ENCODE measurements at regions of chr7 and their contacts with region 1.

Region 1: DNA sequence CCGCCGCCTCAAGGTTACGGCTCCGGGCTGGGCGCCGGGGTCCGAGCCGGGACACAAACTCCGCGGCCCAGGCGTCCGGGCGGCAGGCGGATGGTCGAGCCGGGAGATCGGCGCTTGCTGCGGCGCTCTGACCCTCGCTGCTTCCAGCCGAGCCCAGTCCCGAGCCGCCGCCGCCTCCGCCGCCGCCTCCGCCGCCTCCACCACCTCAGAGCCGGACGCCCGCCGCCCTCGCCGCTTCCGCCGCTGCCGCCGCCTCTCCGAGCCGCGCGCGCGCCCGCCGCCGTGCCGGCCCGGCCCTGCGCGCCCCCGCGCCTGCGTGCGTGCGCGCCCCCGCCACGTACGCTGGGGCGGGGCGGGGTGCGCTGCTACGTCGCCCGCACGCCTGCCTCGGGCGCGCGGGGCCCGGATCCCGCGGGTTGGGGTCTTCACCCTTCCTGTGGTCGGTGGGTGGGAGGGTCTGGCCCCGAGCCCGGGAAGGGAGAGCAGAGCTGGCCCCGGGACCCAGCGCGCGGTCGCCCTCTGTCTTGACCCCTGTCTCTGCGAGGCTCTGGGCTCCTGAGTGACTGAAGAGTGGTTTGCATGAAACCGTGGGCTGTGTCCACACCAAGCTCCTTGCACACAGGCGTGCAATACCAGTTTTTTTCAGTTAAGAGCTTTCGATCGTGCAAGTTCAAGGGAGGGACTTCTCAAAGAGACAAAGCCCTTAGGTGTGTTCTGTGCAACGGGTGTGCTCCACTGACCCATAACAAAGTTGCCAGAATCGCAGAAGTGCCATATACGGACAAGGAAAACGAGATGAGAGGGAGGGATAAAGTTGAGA is at the start of gene SMURF1:
- DNase-seq: peak in 1 of 2 experiments; percentile 79
- H3K4me3 ChIP-seq: peak within 1 kb of the TSS; percentile 75
- H3K27ac ChIP-seq: peak within 1 kb of the TSS; percentile 82
- H3K4me1 ChIP-seq: peaks cover 33% of the 10 kb centered on the region
- H3K27me3 ChIP-seq: no peaks in the 10 kb centered on the region
- CTCF ChIP-seq: no peak
- total RNA-seq, gene SMURF1: 53.2 and 63.9 TPM in 2 replicates

Region 2: DNA sequence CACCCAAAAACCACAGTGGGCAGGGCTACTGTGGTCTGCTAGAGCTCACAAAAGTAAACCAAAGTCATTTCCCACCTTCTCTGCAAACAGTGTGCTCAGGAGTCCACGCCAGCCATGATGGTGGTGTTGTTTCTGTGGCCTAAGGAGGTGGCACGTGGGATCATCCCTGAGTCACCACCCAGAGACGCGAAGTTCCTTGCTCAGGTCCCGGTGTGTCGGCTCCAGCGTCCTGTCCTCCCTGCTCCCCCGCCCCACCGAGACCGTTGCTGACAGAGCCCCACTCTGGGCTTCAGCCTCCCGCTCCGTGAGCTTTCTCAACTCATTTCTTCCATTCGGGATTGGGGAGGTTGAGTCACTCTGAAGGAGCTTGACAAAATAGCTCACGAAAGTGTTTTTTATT is 408.3 kb before region 1 on chr7:
- CTCF ChIA-PET with region 1: no interaction called
- POLR2A ChIA-PET with region 1: no interaction called
- intact Hi-C with region 1: no loop called
- DNase-seq: no peak
- H3K4me3 ChIP-seq: no peak overlapping the region
- H3K27ac ChIP-seq: no peak overlapping the region
- H3K4me1 ChIP-seq: no peaks in the 10 kb centered on the region
- H3K27me3 ChIP-seq: peaks cover 43% of the 10 kb centered on the region
- CTCF ChIP-seq: no peak

Region 3: DNA sequence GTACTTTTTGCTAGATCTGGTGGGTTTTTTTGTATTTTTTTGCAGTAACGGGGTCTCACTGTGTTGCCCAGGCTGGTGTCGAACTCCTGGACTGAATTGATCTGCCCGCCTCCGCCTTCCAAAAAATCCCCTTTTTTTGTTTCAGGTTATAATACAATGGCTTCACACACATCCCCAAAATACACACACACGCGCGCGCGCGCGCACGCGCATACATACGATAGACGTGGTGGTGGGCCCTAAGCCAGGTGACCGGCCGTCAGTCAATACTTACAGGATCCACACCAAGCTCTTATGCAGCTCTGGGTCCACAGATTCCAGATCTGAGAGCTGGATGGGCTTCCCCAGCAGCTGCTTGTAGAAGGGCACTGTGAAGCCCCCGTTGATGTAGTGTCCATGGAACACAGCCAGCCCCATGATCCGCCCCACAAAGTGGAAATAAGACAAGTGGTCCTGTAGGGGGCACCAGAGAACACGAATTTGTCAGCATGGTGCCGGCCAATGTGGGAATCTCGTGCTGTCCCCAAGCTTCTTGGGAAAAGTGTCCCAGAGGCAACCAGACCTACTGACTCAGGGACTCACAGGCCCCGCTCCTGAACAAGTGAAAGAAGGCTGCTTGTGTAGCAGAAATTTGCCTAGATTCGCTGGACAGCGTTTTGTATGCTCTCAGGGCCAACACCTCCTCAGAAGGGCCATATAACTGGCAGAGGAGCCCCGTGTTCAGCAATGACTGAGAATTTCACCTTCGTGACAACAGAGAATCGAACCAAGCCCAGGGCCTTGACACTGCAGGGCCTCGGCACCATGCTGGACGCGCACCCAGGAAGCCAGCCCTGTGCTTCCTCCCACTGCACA is 103.7 kb before region 1 on chr7:
- CTCF ChIA-PET with region 1: no interaction called
- POLR2A ChIA-PET with region 1: no interaction called
- intact Hi-C with region 1: loop called (anchors 1 kb)
- DNase-seq: peak; percentile 64 to 75
- H3K4me3 ChIP-seq: no peak overlapping the region
- H3K27ac ChIP-seq: peak overlapping the region; percentile 20
- H3K4me1 ChIP-seq: no peaks in the 10 kb centered on the region
- H3K27me3 ChIP-seq: no peaks in the 10 kb centered on the region
- CTCF ChIP-seq: peak; percentile 81

Region 4: DNA sequence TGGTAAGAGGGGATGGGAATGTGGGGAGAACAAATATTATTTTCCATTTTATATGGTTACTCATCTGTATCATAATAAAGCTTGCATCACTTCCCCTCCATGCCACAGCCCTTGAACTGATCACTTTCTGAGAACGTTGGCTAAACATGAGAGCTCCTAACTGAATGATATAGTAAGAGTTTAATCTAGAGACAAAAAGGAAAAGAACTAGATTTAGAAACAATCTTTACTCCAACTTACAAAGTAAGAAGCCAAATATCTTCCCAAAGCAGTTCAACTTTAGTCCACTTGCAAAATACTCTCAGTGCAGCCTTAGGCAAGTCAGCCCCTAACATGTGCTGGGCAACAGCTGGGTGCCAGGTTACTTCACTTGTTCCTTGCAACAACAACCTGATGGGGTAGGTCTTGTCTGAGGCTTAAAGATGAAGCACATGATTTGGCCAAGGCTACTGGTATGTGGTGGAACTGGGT is 20.5 kb before region 1 on chr7:
- CTCF ChIA-PET with region 1: no interaction called
- POLR2A ChIA-PET with region 1: interaction called, 25 read pairs
- intact Hi-C with region 1: loop called (anchors 1 kb)
- DNase-seq: peak; percentile 68 to 87
- H3K4me3 ChIP-seq: no peak overlapping the region; the same call in 1 of the 2 replicates
- H3K27ac ChIP-seq: peak overlapping the region; percentile 92
- H3K4me1 ChIP-seq: peaks cover 60% of the 10 kb centered on the region
- H3K27me3 ChIP-seq: no peaks in the 10 kb centered on the region
- CTCF ChIP-seq: no peak

Region 5: GRCh38 chr7:99258501-99258900 is 114.4 kb after region 1 on chr7:
- CTCF ChIA-PET with region 1: no interaction called
- POLR2A ChIA-PET with region 1: interaction called, 33 read pairs
- intact Hi-C with region 1: no loop called
- DNase-seq: no peak
- H3K4me3 ChIP-seq: no peak overlapping the region
- H3K27ac ChIP-seq: no peak overlapping the region
- H3K4me1 ChIP-seq: peaks cover 8% of the 10 kb centered on the region; the same call in 1 of the 2 replicates
- H3K27me3 ChIP-seq: no peaks in the 10 kb centered on the region
- CTCF ChIP-seq: no peak

Region 6: GRCh38 chr7:99325545-99326407 is 181.7 kb after region 1 on chr7 and contains the start of gene ARPC1A:
- CTCF ChIA-PET with region 1: no interaction called
- POLR2A ChIA-PET with region 1: no interaction called
- intact Hi-C with region 1: loop called (anchors 5 kb)
- DNase-seq: peak; percentile 82 to 96
- H3K4me3 ChIP-seq: peak within 1 kb of the TSS; percentile 93
- H3K27ac ChIP-seq: peak within 1 kb of the TSS; percentile 97
- H3K4me1 ChIP-seq: peaks cover 44% of the 10 kb centered on the region
- H3K27me3 ChIP-seq: no peaks in the 10 kb centered on the region
- CTCF ChIP-seq: no peak
- total RNA-seq, gene ARPC1A: 274 and 305 TPM in 2 replicates

Region 7: DNA sequence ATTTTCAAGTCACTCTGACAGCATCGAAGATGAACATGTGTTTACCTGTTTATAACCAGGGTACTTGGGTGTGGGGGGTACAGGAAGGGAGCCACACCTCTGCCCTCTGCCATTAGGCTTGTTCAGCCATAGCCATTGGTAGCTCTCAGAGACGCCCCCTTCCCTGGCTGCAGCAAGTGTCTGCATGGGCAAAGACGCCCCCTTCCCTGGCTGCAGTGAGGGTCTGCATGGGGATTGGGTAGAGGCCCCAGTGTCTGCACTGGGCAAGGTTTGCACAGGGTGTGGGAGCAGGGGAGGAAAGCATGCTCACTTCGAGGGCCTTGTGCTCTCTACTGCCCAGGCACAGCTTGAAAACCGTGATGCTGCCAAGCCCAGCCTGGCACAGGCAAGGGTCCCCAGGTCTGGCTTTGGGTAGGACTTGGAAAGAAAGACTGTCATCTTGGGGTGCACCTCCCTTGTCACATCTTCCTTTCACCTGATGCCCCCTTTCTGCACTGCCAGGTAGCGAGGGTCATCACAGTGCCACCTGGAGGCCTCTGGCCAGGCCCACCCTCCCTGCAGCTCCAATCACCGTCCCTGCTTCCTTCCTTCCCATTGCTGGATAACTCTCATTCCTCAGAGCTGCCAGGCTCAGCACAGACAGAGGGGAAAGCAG is 457.7 kb after region 1 on chr7:
- CTCF ChIA-PET with region 1: no interaction called
- POLR2A ChIA-PET with region 1: no interaction called
- intact Hi-C with region 1: no loop called
- DNase-seq: no peak
- H3K4me3 ChIP-seq: no peak overlapping the region
- H3K27ac ChIP-seq: no peak overlapping the region
- H3K4me1 ChIP-seq: no peaks in the 10 kb centered on the region
- H3K27me3 ChIP-seq: no peaks in the 10 kb centered on the region
- CTCF ChIP-seq: no peak